ENCODE measurements at regions of chr2 and their contacts with region 1.

Region 1: DNA sequence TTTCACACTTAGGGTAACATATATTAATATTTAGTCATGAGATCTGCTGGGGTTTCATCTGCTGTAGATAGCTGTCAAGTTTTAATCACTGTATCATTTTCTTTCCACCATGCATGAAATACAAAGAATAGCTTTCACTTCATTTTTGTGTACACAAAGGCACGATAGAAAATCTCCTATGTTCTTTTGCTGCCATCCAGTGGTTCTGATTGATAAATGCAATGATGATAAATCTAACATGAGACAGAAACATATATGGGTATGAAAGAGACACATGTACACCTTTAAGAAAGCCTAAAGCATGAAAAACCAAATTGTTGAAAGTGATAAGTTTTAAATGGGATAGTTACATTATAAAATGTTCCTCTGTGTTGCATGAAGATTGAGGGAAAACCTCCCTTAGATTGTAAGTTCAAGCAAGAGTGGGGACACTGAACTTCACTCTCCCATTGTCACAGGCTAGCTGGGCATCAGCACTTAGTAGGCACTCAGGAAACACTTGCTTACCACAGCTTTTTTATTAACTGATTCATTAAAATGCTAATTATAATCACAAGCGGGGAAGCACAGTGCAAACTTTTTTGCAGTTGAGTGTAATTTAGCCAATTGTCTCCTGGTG is 31.2 kb downstream of the C1D start:
- DNase-seq: peak in 5 of 9 donors; percentile 10 to 35 (median 18)
- ATAC-seq: peak; percentile 54
- H3K4me3 ChIP-seq: no peak overlapping the region
- H3K4me3 Mint-ChIP-seq: no peak overlapping the region
- H3K27ac ChIP-seq: no peak overlapping the region
- H3K27ac Mint-ChIP-seq: no peak overlapping the region
- H3K4me1 ChIP-seq: no peaks in the 10 kb centered on the region
- H3K4me1 Mint-ChIP-seq: no peaks in the 10 kb centered on the region
- H3K27me3 ChIP-seq: no peaks in the 10 kb centered on the region
- H3K27me3 Mint-ChIP-seq: peaks cover 0 to 19% (median 7%) of the 10 kb centered on the region in 5 donors

Region 2: GRCh38 chr2:66429071-66429477 is 1602.6 kb before region 1 on chr2:
- CTCF ChIA-PET with region 1: no interaction called
- POLR2A ChIA-PET with region 1: no interaction called
- intact Hi-C with region 1: loop called in 1 of 2 experiments (anchors 2 kb)
- DNase-seq: no peak
- ATAC-seq: peak; percentile 41
- H3K4me3 ChIP-seq: no peak overlapping the region
- H3K4me3 Mint-ChIP-seq: no peak overlapping the region
- H3K27ac ChIP-seq: no peak overlapping the region
- H3K27ac Mint-ChIP-seq: no peak overlapping the region
- H3K4me1 ChIP-seq: peaks cover 0 to 4% of the 10 kb centered on the region in 2 donors
- H3K4me1 Mint-ChIP-seq: peaks cover 5 to 22% (median 14%) of the 10 kb centered on the region in 7 donors
- H3K27me3 ChIP-seq: peaks cover 0 to 5% of the 10 kb centered on the region in 2 donors
- H3K27me3 Mint-ChIP-seq: peaks cover 60 to 85% (median 81%) of the 10 kb centered on the region in 5 donors